ENCODE measurements at regions of chr1 and their contacts with region 1.

Region 1: GRCh38 chr1:174022080-174022975 is at the start of gene RC3H1:
- DNase-seq: peak; percentile 96
- H3K4me3 Mint-ChIP-seq: peak within 1 kb of the TSS; percentile 93
- H3K27ac Mint-ChIP-seq: peak within 1 kb of the TSS; percentile 94
- H3K4me1 Mint-ChIP-seq: peaks cover 33% of the 10 kb centered on the region
- H3K27me3 Mint-ChIP-seq: peaks cover 2% of the 10 kb centered on the region
- total RNA-seq, gene RC3H1: 41.7 and 43.3 TPM in 2 replicates

Region 2: GRCh38 chr1:173476664-173477285 is 545.6 kb before region 1 on chr1:
- intact Hi-C with region 1: loop called (anchors 2 kb)
- DNase-seq: peak; percentile 92
- H3K4me3 Mint-ChIP-seq: peak overlapping the region; percentile 92
- H3K27ac Mint-ChIP-seq: peak overlapping the region; percentile 96
- H3K4me1 Mint-ChIP-seq: peaks cover 48% of the 10 kb centered on the region
- H3K27me3 Mint-ChIP-seq: no peaks in the 10 kb centered on the region

Region 3: DNA sequence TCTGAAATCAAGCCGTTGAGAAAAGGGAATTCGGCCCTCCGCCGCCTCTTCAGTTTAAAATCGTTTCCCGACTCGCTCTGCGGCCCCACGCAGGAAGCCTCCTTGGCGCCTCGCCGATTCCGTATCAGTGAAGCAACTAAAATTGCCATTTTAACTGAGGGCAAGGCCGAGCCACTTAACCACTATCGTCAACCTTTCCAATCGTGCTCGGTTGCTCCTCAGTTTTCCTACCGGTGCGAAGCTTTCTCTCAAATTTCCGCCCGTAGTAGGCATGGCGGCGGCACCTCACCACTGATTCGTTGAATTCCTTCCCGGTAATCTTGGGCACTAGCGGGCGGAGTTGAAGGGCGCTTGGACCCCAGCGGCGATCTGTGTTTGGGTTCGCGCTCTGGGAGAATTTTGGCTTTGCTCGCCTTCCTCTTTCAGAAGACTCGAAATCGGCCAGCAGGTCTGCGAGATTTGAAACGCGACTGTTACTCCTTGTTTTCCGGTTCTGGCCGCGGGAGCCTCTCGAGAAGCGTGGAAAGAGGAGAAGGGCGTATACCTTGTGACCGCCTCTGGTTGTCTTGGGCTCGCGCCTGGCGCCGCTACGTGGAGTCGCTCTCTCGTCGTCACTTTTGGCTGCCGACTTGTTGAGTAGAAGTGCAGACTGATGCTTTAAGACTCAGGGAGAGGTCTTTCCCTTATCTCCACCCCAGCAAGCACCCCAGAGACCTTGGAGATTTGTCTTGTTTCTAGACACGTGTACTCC is 197.8 kb before region 1 on chr1 and contains the starts of genes CENPL and DARS2:
- intact Hi-C with region 1: loop called (anchors 1 kb)
- DNase-seq: peak; percentile 97
- H3K4me3 Mint-ChIP-seq: peak within 1 kb of the TSS; percentile 99
- H3K27ac Mint-ChIP-seq: peak within 1 kb of the TSS; percentile 98
- H3K4me1 Mint-ChIP-seq: peaks cover 49% of the 10 kb centered on the region
- H3K27me3 Mint-ChIP-seq: no peaks in the 10 kb centered on the region
- total RNA-seq, gene CENPL: 23.2 and 24.4 TPM in 2 replicates
- total RNA-seq, gene DARS2: 47.6 and 52.2 TPM in 2 replicates

Region 4: GRCh38 chr1:173886746-173887611 is 135.3 kb before region 1 on chr1:
- intact Hi-C with region 1: no loop called
- DNase-seq: no peak
- H3K4me3 Mint-ChIP-seq: no peak overlapping the region
- H3K27ac Mint-ChIP-seq: peak overlapping the region; percentile 16
- H3K4me1 Mint-ChIP-seq: peaks cover 11% of the 10 kb centered on the region
- H3K27me3 Mint-ChIP-seq: no peaks in the 10 kb centered on the region

Region 5: DNA sequence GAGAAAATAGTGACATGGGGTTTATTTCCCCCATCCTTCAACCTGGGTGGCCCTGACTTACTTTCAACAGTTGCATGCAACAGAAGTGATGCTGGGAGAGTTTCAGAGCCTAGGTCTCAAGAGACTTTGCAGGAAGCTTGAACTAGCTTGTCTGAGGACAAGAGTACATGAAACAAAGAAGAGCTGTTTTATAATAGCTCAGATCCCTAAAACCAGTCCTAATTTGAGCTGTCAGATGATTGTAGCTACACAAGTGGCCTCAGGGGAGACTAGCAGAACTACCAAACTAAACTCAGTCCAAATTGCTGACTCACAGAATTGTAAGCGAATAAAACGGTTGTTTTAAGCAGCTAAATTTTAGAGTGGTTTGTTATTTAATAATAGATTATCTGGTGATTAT is 17.3 kb before region 1 on chr1:
- intact Hi-C with region 1: no loop called
- DNase-seq: no peak
- H3K4me3 Mint-ChIP-seq: no peak overlapping the region
- H3K27ac Mint-ChIP-seq: no peak overlapping the region
- H3K4me1 Mint-ChIP-seq: peaks cover 17% of the 10 kb centered on the region
- H3K27me3 Mint-ChIP-seq: no peaks in the 10 kb centered on the region

Region 6: GRCh38 chr1:174159252-174160108 is 137.2 kb after region 1 on chr1 and contains the start of gene RABGAP1L:
- intact Hi-C with region 1: loop called (anchors 1 kb)
- DNase-seq: peak; percentile 98
- H3K4me3 Mint-ChIP-seq: peak within 1 kb of the TSS; percentile 93
- H3K27ac Mint-ChIP-seq: peak within 1 kb of the TSS; percentile 98
- H3K4me1 Mint-ChIP-seq: peaks cover 52% of the 10 kb centered on the region
- H3K27me3 Mint-ChIP-seq: no peaks in the 10 kb centered on the region
- total RNA-seq, gene RABGAP1L: 36.9 and 37.2 TPM in 2 replicates

Measured in activated CD4-positive, alpha-beta T cell treated with anti-CD3 and anti-CD28 coated beads, Interleukin-2, amount 10 ng/mL, durations not matched to agents 24 days and 14 days (primary cell).